PC-3 (cell line): ENCODE measurements at regions of chr10 and their contacts with region 1.

Region 1: GRCh38 chr10:112687647-112688046 is 240.6 kb downstream of the VTI1A start:
- DNase-seq: peak; percentile 54
- ATAC-seq: peak; percentile 82
- H3K4me3 ChIP-seq: no peak overlapping the region
- H3K27ac ChIP-seq: no peak overlapping the region
- H3K4me1 ChIP-seq: peaks cover 4% of the 10 kb centered on the region; the same call in 1 of the 2 replicates
- H3K27me3 ChIP-seq: no peaks in the 10 kb centered on the region
- CTCF ChIP-seq: no peak

Region 2: DNA sequence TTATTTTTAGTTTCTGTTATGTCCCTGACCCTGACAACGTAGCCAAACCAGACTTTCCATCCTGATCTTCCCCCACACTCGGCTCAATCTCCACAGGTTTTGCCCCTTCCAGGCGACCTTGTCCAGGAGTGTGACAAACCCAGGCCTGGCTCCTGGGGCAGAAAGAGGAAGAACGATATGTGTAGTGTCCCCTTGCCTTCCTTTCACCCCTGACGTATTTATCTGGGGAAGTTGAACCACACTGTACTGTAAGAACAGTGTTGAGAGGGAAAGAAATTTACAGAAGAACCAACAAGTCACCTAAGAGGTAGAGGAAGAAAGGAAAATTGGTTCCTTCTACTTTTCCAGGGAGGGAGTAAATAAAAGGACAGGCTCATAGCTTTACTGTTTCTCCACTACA is 82.6 kb before region 1 on chr10:
- CTCF ChIA-PET with region 1: no interaction called
- POLR2A ChIA-PET with region 1: interaction called, 13 read pairs
- intact Hi-C with region 1: no loop called
- DNase-seq: no peak
- ATAC-seq: no peak
- H3K4me3 ChIP-seq: no peak overlapping the region
- H3K27ac ChIP-seq: no peak overlapping the region
- H3K4me1 ChIP-seq: peaks cover 12% of the 10 kb centered on the region; the same call in 1 of the 2 replicates
- H3K27me3 ChIP-seq: no peaks in the 10 kb centered on the region
- CTCF ChIP-seq: no peak